PC-9 (cell line): ENCODE measurements at regions of chr5 and their contacts with region 1.

Region 1: GRCh38 chr5:167352801-167353200 is 938.6 kb upstream of the WWC1 start:
- DNase-seq: peak in 1 of 2 experiments; percentile 7
- H3K4me3 ChIP-seq: no peak overlapping the region
- H3K27ac ChIP-seq: no peak overlapping the region
- H3K4me1 ChIP-seq: no peaks in the 10 kb centered on the region
- H3K27me3 ChIP-seq: peaks cover 11% of the 10 kb centered on the region
- CTCF ChIP-seq: no peak

Region 2: DNA sequence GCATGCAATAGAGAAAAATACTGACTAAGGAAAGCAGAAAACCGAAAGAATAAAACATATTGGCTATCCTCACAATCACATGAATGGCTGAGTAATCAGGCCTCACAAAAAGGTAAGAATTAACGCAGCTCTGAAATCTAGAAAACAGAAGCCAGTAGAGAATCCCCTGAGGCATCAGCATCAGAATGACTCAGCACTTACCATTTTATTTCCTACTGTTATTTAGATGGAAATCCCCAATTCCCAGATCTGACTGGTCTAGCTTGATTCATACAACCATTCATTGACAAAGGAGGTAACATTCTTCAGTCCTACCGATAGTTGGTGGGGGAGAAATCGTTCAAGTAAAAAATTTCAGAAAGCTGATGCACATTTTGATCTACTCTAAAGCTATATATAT is 469.8 kb before region 1 on chr5:
- CTCF ChIA-PET with region 1: no interaction called
- POLR2A ChIA-PET with region 1: no interaction called
- intact Hi-C with region 1: loop called (anchors 5 kb)
- DNase-seq: peak in 1 of 2 experiments; percentile 13
- H3K4me3 ChIP-seq: no peak overlapping the region
- H3K27ac ChIP-seq: no peak overlapping the region
- H3K4me1 ChIP-seq: no peaks in the 10 kb centered on the region
- H3K27me3 ChIP-seq: 0 out of 2 replicates have a peak, but pooled peaks cover 9% of the 10 kb centered on the region
- CTCF ChIP-seq: no peak

Region 3: GRCh38 chr5:167307042-167307441 is 45.8 kb before region 1 on chr5:
- CTCF ChIA-PET with region 1: no interaction called
- POLR2A ChIA-PET with region 1: no interaction called
- intact Hi-C with region 1: no loop called
- DNase-seq: no peak
- H3K4me3 ChIP-seq: no peak overlapping the region
- H3K27ac ChIP-seq: no peak overlapping the region
- H3K4me1 ChIP-seq: no peaks in the 10 kb centered on the region
- H3K27me3 ChIP-seq: peaks cover 47% of the 10 kb centered on the region
- CTCF ChIP-seq: no peak

Region 4: DNA sequence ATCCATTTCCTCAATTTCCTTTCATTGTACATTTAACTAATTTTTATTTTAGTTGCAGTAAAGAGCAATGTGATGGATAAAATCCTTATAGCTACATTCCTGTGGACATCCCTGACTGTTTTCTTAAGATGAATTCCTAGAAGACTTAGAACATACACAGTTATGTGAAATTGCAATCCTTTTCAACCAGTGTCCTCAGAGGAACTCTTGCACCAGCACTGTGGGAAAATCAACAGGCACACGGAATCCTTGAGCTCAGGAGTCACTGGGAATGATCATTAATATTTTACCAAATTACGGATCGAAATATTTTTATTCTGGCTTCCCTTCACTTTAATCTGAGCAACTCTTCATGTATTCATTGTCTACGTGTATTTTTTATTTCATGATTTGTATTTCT is 36.7 kb after region 1 on chr5:
- CTCF ChIA-PET with region 1: no interaction called
- POLR2A ChIA-PET with region 1: interaction called, 11 read pairs
- intact Hi-C with region 1: no loop called
- DNase-seq: no peak
- H3K4me3 ChIP-seq: no peak overlapping the region
- H3K27ac ChIP-seq: no peak overlapping the region
- H3K4me1 ChIP-seq: no peaks in the 10 kb centered on the region
- H3K27me3 ChIP-seq: 0 out of 2 replicates have a peak, but pooled peaks cover under 1% of the 10 kb centered on the region
- CTCF ChIP-seq: no peak